ENCODE measurements at regions of chr14 and their contacts with region 1.

Region 1: GRCh38 chr14:38522724-38523123 is 266.8 kb upstream of the CLEC14A start:
- DNase-seq: no peak
- H3K4me3 ChIP-seq: no peak overlapping the region
- H3K27ac ChIP-seq: no peak overlapping the region
- H3K4me1 ChIP-seq: peaks cover 28% of the 10 kb centered on the region
- H3K27me3 ChIP-seq: no peaks in the 10 kb centered on the region
- CTCF ChIP-seq: no peak

Region 2: DNA sequence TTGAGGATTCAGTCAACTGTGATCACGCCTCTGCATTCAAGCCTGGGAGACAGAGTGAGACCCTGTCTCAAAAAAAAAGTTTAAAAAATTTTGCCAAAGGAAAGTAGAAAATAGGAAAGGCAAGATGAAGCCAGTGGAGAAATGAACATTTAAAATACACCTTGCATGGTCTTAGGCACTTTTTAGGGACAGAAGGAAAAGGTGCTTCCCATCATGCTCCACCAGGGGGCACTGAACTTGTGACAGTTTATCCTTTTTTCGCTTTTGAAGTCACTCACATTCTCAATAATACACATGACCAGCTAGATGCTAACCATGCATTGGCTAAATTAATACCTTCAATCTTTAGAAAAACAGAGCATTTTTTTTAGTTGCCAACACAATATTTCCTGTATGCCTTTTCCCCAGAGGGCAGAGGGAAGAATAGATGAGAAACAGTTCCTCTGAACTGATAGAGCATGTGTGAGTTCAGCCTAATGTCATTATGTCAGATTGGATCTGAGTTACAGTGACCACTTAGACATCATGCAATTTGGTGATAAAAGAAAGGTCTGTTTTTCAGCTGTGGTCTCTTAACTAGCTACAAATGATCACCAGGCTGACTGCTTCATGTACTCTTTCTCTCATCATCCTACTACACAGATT is 536.8 kb before region 1 on chr14:
- CTCF ChIA-PET with region 1: no interaction called
- POLR2A ChIA-PET with region 1: no interaction called
- intact Hi-C with region 1: loop called (anchors 10 kb)
- DNase-seq: peak; percentile 77
- H3K4me3 ChIP-seq: no peak overlapping the region
- H3K27ac ChIP-seq: no peak overlapping the region
- H3K4me1 ChIP-seq: no peaks in the 10 kb centered on the region
- H3K27me3 ChIP-seq: no peaks in the 10 kb centered on the region
- CTCF ChIP-seq: peak; percentile 84

Region 3: DNA sequence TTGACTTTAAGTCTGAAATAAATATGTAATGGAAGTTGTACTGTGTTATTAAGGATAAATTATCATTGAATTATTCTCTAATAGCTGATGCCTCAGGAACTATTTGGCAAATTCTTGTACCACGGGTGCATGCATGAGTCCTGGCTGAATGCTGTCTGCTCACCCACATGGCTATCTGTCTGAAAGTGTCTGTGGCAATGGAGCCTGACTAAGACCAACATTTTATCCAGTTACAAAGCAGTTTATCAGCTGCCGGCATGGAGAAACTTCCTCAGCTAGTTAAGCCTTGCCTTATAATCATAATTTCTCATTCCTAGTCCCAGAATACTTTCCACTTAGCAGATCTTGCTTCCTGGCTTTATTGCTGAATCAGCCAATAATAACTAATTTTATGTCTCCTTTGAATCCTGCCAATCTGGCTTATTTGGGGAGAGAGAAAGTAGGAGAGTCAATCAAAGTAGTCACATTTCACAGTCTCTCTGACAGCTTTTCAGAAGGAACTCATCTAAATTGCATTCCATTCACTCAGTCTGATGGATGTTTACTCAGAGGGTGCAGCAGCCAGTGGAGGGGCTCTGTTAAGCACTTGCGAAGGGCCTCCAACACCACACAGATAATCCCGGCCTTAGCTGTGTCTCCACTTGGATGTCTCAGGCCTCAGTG is 13.8 kb after region 1 on chr14:
- CTCF ChIA-PET with region 1: no interaction called
- POLR2A ChIA-PET with region 1: interaction called, 10 read pairs
- intact Hi-C with region 1: no loop called
- DNase-seq: peak; percentile 58
- H3K4me3 ChIP-seq: no peak overlapping the region
- H3K27ac ChIP-seq: peak overlapping the region; percentile 45
- H3K4me1 ChIP-seq: peaks cover 22% of the 10 kb centered on the region
- H3K27me3 ChIP-seq: no peaks in the 10 kb centered on the region
- CTCF ChIP-seq: no peak

Region 4: DNA sequence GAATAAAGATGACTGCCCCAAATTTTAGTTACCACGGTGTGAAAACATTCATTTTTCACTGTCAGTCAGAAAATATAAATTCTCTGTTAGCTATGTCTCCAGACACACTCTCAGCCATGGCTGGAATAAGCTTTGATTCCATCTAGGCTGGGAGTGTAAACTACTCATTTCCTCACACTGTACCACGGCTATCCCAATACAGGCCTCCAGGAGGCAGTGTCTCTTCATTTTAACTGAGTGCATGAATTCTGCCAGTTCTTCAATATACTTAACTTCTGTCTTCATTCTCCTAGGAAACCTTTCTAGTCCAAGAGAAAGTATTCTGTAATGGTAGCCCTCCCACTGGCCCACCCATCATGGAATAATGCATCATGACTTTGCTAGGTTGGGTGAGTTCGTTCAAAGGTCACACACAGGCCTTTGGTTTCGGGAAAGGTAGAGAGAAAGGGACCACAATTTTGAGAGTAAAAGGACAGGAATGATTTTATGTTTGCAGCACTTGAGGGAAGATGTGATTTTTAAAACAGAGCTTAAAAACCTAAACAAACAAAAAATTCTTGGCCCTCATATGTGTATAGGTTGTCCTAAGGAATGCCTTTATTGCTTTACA is 199.2 kb after region 1 on chr14:
- CTCF ChIA-PET with region 1: no interaction called
- POLR2A ChIA-PET with region 1: no interaction called
- intact Hi-C with region 1: loop called (anchors 5 kb)
- DNase-seq: peak; percentile 77
- H3K4me3 ChIP-seq: no peak overlapping the region
- H3K27ac ChIP-seq: no peak overlapping the region
- H3K4me1 ChIP-seq: peaks cover 7% of the 10 kb centered on the region
- H3K27me3 ChIP-seq: no peaks in the 10 kb centered on the region
- CTCF ChIP-seq: peak; percentile 90

Region 5: DNA sequence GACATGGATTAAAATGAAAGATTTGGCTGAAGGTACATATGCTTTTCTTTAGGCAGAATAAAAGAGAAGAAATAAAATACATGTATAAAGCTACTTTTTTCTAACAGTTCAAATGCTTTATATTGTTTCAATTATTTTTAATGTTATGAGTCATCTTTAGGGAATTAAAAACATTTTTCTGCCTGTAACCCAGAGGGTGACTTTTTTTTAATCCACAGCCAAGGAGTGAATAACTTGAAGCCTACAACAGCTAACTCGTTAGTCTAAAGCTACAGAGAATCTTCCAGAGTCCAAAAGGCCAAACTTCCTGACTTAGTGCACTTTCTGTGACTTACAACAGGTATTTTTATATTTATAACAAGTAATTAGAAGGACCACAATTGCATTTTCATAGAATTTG is 428.7 kb after region 1 on chr14:
- CTCF ChIA-PET with region 1: no interaction called
- POLR2A ChIA-PET with region 1: no interaction called
- intact Hi-C with region 1: no loop called
- DNase-seq: peak; percentile 32
- H3K4me3 ChIP-seq: no peak overlapping the region
- H3K27ac ChIP-seq: no peak overlapping the region
- H3K4me1 ChIP-seq: peaks cover 6% of the 10 kb centered on the region
- H3K27me3 ChIP-seq: no peaks in the 10 kb centered on the region
- CTCF ChIP-seq: no peak

Region 6: DNA sequence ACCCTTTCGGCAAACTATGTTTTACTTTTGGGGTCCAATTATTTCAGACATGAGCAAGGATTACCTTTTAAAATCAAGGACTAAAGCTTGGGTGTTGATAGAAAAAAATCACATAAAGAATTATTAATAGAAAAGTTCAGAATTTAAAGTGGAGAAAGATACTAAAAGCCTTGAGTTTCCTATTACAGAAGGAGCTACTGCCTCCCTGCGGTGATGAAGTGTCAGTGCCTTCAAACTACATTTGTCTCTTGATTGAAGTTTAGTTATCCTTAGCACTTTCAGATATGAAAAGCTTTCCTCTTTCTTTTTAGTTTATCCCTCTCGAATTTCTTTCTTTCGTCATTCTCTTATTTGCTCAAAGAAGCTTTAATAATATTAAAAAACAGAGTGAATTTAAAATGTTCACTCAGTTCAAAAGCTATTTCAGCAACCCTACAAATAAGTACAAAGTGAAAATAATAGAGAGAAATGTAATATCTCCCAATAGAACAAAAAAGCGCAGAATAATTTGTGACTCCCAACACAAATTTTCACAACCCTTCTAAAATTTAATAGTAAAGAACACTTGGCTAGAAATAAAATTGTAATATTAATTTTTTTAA is 492.7 kb after region 1 on chr14:
- CTCF ChIA-PET with region 1: no interaction called
- POLR2A ChIA-PET with region 1: no interaction called
- intact Hi-C with region 1: loop called (anchors 5 kb)
- DNase-seq: peak; percentile 69
- H3K4me3 ChIP-seq: no peak overlapping the region
- H3K27ac ChIP-seq: no peak overlapping the region
- H3K4me1 ChIP-seq: peaks cover 5% of the 10 kb centered on the region
- H3K27me3 ChIP-seq: no peaks in the 10 kb centered on the region
- CTCF ChIP-seq: peak; percentile 90